CD4-positive, alpha-beta memory T cell (primary cell): ENCODE measurements at regions of chr2 and their contacts with region 1.

Region 1: GRCh38 chr2:38274286-38275276 is 102.5 kb downstream of the ATL2 start:
- DNase-seq: peak; percentile 35 to 49 (median 37)
- H3K4me3 ChIP-seq: no peak overlapping the region
- H3K4me3 Mint-ChIP-seq: no peak overlapping the region
- H3K27ac ChIP-seq: no peak overlapping the region
- H3K27ac Mint-ChIP-seq: no peak overlapping the region
- H3K4me1 ChIP-seq: no peaks in the 10 kb centered on the region
- H3K4me1 Mint-ChIP-seq: peaks cover 0 to 2% (median under 1%) of the 10 kb centered on the region in 4 donors
- H3K27me3 ChIP-seq: no peaks in the 10 kb centered on the region
- H3K27me3 Mint-ChIP-seq: peaks cover 0 to 2% of the 10 kb centered on the region in 2 donors

Region 2: DNA sequence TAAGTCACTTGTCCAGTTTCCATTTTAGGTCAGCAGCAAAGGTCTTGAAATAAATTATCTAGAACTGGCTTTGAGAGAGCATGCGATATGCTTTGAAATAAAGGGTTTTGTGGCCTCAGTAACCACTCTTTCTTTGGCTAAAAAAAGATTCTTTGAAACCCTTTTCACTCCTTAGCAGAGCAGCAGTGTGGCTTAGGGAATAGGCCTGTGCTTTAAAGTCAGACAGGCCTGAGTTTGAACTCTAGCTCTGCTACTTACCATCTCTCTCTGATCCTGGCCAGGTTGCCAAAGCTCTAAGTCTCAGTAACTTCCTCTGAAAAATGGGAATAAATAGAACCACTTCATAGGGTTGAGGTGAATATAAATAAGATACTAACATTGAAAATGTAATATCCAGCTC is 877.4 kb before region 1 on chr2:
- CTCF ChIA-PET with region 1: interaction called, 22 read pairs
- POLR2A ChIA-PET with region 1: no interaction called
- intact Hi-C with region 1: loop called (anchors 2 kb)
- DNase-seq: no peak
- H3K4me3 ChIP-seq: no peak overlapping the region
- H3K4me3 Mint-ChIP-seq: no peak overlapping the region
- H3K27ac ChIP-seq: no peak overlapping the region
- H3K27ac Mint-ChIP-seq: no peak overlapping the region
- H3K4me1 ChIP-seq: no peaks in the 10 kb centered on the region
- H3K4me1 Mint-ChIP-seq: peaks cover 1 to 6% (median 2%) of the 10 kb centered on the region in 4 donors
- H3K27me3 ChIP-seq: no peaks in the 10 kb centered on the region
- H3K27me3 Mint-ChIP-seq: no peaks in the 10 kb centered on the region

Region 3: GRCh38 chr2:37890893-37891495 is 383.6 kb before region 1 on chr2:
- CTCF ChIA-PET with region 1: no interaction called
- POLR2A ChIA-PET with region 1: no interaction called
- intact Hi-C with region 1: loop called (anchors 5 kb)
- DNase-seq: peak; percentile 40 to 51 (median 47)
- H3K4me3 ChIP-seq: no peak overlapping the region
- H3K4me3 Mint-ChIP-seq: peak overlapping the region in 3 of 8 donors; percentile 22 to 79 (median 51)
- H3K27ac ChIP-seq: no peak overlapping the region
- H3K27ac Mint-ChIP-seq: peak overlapping the region in 1 of 7 donors; percentile 25
- H3K4me1 ChIP-seq: peaks cover 34% of the 10 kb centered on the region
- H3K4me1 Mint-ChIP-seq: peaks cover 35 to 45% (median 37%) of the 10 kb centered on the region in 4 donors
- H3K27me3 ChIP-seq: no peaks in the 10 kb centered on the region
- H3K27me3 Mint-ChIP-seq: peaks cover 3 to 5% of the 10 kb centered on the region in 2 donors

Region 4: DNA sequence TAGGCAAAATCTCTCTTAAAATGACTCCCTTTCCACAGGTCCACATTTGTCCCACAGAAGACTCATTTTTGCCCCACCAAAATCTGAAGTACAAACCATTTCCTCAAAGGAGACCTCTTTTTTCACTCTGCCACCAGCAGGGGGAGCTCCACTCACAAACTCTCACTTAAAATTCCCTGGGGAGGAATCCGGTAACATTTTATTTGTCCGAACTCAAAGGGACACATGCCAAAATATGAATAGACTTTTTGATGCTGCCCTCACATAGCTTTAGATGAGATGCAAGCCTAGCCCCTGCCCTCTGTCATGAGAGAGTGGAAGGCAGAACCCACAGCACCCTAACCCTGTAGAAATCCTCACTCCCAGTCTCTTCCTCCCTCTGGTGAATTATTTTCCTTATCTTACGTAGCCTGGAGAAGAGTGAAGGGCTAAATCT is 292.4 kb before region 1 on chr2:
- CTCF ChIA-PET with region 1: interaction called, 23 read pairs
- POLR2A ChIA-PET with region 1: no interaction called
- intact Hi-C with region 1: loop called (anchors 1 kb)
- DNase-seq: peak in 4 of 5 donors; percentile 31 to 47 (median 32)
- H3K4me3 ChIP-seq: no peak overlapping the region
- H3K4me3 Mint-ChIP-seq: no peak overlapping the region
- H3K27ac ChIP-seq: no peak overlapping the region
- H3K27ac Mint-ChIP-seq: no peak overlapping the region
- H3K4me1 ChIP-seq: no peaks in the 10 kb centered on the region
- H3K4me1 Mint-ChIP-seq: peaks cover 0 to 3% (median 1%) of the 10 kb centered on the region in 4 donors
- H3K27me3 ChIP-seq: no peaks in the 10 kb centered on the region
- H3K27me3 Mint-ChIP-seq: no peaks in the 10 kb centered on the region

Region 5: GRCh38 chr2:38164881-38165280 is 109.7 kb before region 1 on chr2:
- CTCF ChIA-PET with region 1: no interaction called
- POLR2A ChIA-PET with region 1: no interaction called
- intact Hi-C with region 1: loop called (anchors 5 kb)
- DNase-seq: no peak
- H3K4me3 ChIP-seq: no peak overlapping the region
- H3K4me3 Mint-ChIP-seq: no peak overlapping the region
- H3K27ac ChIP-seq: no peak overlapping the region
- H3K27ac Mint-ChIP-seq: no peak overlapping the region
- H3K4me1 ChIP-seq: no peaks in the 10 kb centered on the region
- H3K4me1 Mint-ChIP-seq: no peaks in the 10 kb centered on the region
- H3K27me3 ChIP-seq: no peaks in the 10 kb centered on the region
- H3K27me3 Mint-ChIP-seq: peaks cover 18 to 39% of the 10 kb centered on the region in 2 donors